CD4-positive, alpha-beta memory T cell (primary cell): ENCODE measurements at regions of chr11 and their contacts with region 1.

Region 1: DNA sequence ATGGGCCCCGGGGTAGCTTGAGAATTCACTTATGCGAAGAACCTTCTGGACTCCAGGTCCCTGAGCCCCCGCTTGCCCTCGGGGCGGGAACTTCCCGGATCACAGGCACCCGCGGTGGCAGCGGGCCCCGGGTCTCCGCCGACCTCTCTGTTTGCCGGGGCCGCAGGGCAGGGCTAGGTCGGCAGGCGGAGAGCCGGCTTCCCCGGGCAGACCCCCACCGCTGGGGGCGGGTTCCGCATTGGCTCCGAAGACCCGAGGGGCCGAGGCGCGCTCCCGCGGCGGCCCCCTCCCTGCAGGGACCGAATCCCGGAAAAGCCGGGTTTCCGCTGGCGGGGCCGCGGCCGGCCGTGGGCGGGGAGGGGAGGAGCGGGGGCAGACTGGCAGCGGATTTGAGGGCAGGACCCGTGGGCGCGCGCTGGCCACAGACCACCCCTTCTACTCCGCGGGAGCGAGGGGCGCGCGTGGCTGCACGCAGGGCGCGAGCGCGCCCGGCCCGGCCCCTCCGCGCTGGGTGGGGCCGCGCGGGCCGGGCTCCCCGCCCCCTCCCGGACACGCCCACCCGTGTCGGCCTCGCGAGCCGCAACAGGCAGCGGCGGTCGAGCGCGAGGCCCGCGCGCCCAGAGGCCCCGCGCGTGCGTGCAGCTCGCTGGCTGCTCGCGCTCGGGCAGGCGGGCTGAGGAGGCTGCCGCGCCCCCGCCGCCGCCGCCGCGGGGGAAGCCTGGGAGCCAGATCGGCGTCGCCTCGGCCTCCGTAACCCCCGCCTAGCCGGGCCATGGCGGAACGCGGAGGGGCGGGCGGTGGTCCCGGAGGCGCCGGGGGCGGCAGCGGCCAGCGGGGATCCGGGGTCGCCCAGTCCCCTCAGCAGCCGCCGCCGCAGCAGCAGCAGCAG is at the start of gene PACS1:
- DNase-seq: peak; percentile 71 to 81 (median 78)
- H3K4me3 ChIP-seq: peak within 1 kb of the TSS; percentile 59 to 98
- H3K4me3 Mint-ChIP-seq: peak within 1 kb of the TSS; percentile 91 to 98 (median 96)
- H3K27ac ChIP-seq: peak within 1 kb of the TSS; percentile 77
- H3K27ac Mint-ChIP-seq: peak within 1 kb of the TSS; percentile 93 to 99 (median 95)
- H3K4me1 ChIP-seq: peaks cover 59% of the 10 kb centered on the region
- H3K4me1 Mint-ChIP-seq: peaks cover 44 to 69% (median 54%) of the 10 kb centered on the region in 4 donors
- H3K27me3 ChIP-seq: no peaks in the 10 kb centered on the region
- H3K27me3 Mint-ChIP-seq: no peaks in the 10 kb centered on the region
- total RNA-seq, gene PACS1: 251 to 262 TPM

Region 2: GRCh38 chr11:65810046-65810868 is 259.7 kb before region 1 on chr11:
- CTCF ChIA-PET with region 1: no interaction called
- POLR2A ChIA-PET with region 1: no interaction called
- intact Hi-C with region 1: no loop called
- DNase-seq: no peak
- H3K4me3 ChIP-seq: no peak overlapping the region
- H3K4me3 Mint-ChIP-seq: peak overlapping the region in 1 of 8 donors; percentile 33
- H3K27ac ChIP-seq: no peak overlapping the region
- H3K27ac Mint-ChIP-seq: peak overlapping the region in 1 of 7 donors; percentile 22
- H3K4me1 ChIP-seq: no peaks in the 10 kb centered on the region
- H3K4me1 Mint-ChIP-seq: peaks cover 0 to 1% (median 0%) of the 10 kb centered on the region in 4 donors
- H3K27me3 ChIP-seq: no peaks in the 10 kb centered on the region
- H3K27me3 Mint-ChIP-seq: peaks cover 4 to 7% of the 10 kb centered on the region in 2 donors

Region 3: GRCh38 chr11:66051766-66052663 is 17.9 kb before region 1 on chr11 and contains the start of gene SF3B2:
- CTCF ChIA-PET with region 1: interaction called, 104 read pairs
- POLR2A ChIA-PET with region 1: interaction called, 66 read pairs
- intact Hi-C with region 1: loop called (anchors 1 kb)
- DNase-seq: peak; percentile 93 to 96 (median 96)
- H3K4me3 ChIP-seq: peak within 1 kb of the TSS; percentile 91 to 99
- H3K4me3 Mint-ChIP-seq: peak within 1 kb of the TSS; percentile 99 to 100 (median 100)
- H3K27ac ChIP-seq: peak within 1 kb of the TSS; percentile 81
- H3K27ac Mint-ChIP-seq: peak within 1 kb of the TSS; percentile 98 to 100 (median 99)
- H3K4me1 ChIP-seq: peaks cover 23% of the 10 kb centered on the region
- H3K4me1 Mint-ChIP-seq: peaks cover 12 to 40% (median 25%) of the 10 kb centered on the region in 4 donors
- H3K27me3 ChIP-seq: no peaks in the 10 kb centered on the region
- H3K27me3 Mint-ChIP-seq: peaks cover 0 to 1% of the 10 kb centered on the region in 2 donors
- total RNA-seq, gene SF3B2: 238 to 240 TPM

Region 4: DNA sequence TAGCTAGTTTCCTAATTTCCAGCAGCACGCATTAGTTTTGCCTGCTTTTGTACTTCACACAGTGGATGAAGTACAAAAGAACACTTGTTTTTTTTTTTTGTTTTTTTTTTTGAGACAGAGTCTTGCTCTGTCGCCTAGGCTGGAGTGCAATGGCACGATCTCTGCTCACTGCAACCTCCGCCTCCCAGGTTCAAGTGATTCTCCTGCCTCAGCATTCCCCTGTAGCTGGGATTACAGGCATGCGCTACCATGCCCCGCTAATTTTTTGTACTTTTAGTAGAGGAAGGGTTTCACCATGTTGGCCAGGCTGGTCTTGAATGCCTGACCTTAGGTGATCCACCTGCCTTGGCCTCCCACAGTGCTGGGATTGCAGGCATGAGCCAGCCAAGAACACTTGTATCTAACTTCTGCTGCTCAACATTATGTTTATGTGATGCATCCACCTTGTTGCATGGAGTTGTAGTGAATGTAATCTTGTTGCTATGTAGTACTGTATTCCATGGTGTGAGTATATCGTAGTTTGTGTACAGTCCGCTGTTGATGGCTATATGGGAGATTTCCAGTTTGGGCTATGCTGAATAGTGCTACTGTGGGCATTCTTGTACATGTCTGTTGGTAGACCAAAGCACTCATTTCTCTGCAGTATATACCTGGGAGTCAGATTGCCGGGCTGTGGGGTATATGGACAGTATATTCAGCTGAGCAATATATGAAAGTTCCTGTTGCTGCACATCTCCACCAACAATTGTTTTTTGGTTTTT is 17.4 kb after region 1 on chr11:
- CTCF ChIA-PET with region 1: interaction called, 146 read pairs
- POLR2A ChIA-PET with region 1: interaction called, 214 read pairs
- intact Hi-C with region 1: no loop called
- DNase-seq: no peak
- H3K4me3 ChIP-seq: no peak overlapping the region
- H3K4me3 Mint-ChIP-seq: peak overlapping the region in 6 of 8 donors; percentile 2 to 64 (median 26)
- H3K27ac ChIP-seq: no peak overlapping the region
- H3K27ac Mint-ChIP-seq: peak overlapping the region; percentile 60 to 93 (median 79)
- H3K4me1 ChIP-seq: peaks cover 73% of the 10 kb centered on the region
- H3K4me1 Mint-ChIP-seq: peaks cover 51 to 82% (median 66%) of the 10 kb centered on the region in 4 donors
- H3K27me3 ChIP-seq: no peaks in the 10 kb centered on the region
- H3K27me3 Mint-ChIP-seq: no peaks in the 10 kb centered on the region

Region 5: GRCh38 chr11:66112601-66113098 is 42.7 kb after region 1 on chr11:
- CTCF ChIA-PET with region 1: interaction called, 231 read pairs
- POLR2A ChIA-PET with region 1: interaction called, 185 read pairs
- intact Hi-C with region 1: no loop called
- DNase-seq: no peak
- H3K4me3 ChIP-seq: no peak overlapping the region
- H3K4me3 Mint-ChIP-seq: peak overlapping the region in 7 of 8 donors; percentile 14 to 84 (median 65)
- H3K27ac ChIP-seq: peak overlapping the region; percentile 49
- H3K27ac Mint-ChIP-seq: peak overlapping the region; percentile 77 to 96 (median 90)
- H3K4me1 ChIP-seq: peaks cover 99% of the 10 kb centered on the region
- H3K4me1 Mint-ChIP-seq: peaks cover 69 to 97% (median 79%) of the 10 kb centered on the region in 4 donors
- H3K27me3 ChIP-seq: no peaks in the 10 kb centered on the region
- H3K27me3 Mint-ChIP-seq: no peaks in the 10 kb centered on the region

Region 6: GRCh38 chr11:66136752-66137123 is 66.8 kb after region 1 on chr11:
- CTCF ChIA-PET with region 1: interaction called, 178 read pairs
- POLR2A ChIA-PET with region 1: interaction called, 55 read pairs
- intact Hi-C with region 1: loop called (anchors 1 kb)
- DNase-seq: peak in 1 of 5 donors; percentile 48
- H3K4me3 ChIP-seq: no peak overlapping the region
- H3K4me3 Mint-ChIP-seq: no peak overlapping the region
- H3K27ac ChIP-seq: no peak overlapping the region
- H3K27ac Mint-ChIP-seq: peak overlapping the region in 5 of 7 donors; percentile 32 to 81 (median 46)
- H3K4me1 ChIP-seq: peaks cover 48% of the 10 kb centered on the region
- H3K4me1 Mint-ChIP-seq: peaks cover 34 to 70% (median 54%) of the 10 kb centered on the region in 4 donors
- H3K27me3 ChIP-seq: no peaks in the 10 kb centered on the region
- H3K27me3 Mint-ChIP-seq: no peaks in the 10 kb centered on the region

Region 7: DNA sequence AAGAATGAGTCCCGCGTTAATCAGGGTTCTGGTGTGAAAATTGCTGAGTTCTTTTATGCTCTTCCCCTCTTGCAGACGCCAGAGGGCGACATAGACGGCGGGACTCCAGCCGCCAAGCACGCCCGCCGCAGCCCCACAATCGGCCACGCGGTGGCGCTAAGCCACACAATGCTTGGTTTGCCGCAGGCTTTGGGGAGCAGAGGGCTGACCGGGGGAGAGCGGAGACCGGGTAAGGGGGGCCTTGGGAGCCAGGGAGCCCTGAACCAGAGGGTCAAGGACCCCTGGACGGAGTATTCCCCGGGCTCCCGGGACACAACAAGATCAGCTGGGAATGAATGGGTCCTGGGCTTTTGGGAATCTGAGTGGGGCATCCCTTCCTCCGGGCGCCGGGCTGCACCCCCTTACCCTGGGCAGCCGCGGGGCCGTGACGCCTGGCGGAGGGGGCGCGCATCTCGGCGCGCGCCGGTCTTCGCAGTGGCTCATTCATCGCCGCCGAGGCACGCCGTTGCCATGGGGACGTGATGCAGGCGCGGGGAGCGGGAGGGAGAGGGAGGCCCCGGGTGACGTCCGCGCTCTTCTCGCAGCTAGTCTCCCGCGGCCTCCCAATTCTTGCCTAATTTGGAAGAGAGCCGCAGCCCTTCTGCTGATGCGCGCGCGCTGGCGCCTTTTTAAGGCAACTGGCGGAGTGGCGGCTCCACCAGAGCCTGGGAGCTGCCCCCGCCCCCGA is 338.7 kb after region 1 on chr11:
- CTCF ChIA-PET with region 1: no interaction called
- POLR2A ChIA-PET with region 1: no interaction called
- intact Hi-C with region 1: no loop called
- DNase-seq: peak; percentile 86 to 92 (median 89)
- H3K4me3 ChIP-seq: peak overlapping the region in 1 of 2 donors; percentile 70
- H3K4me3 Mint-ChIP-seq: peak overlapping the region; percentile 76 to 91 (median 80)
- H3K27ac ChIP-seq: no peak overlapping the region
- H3K27ac Mint-ChIP-seq: peak overlapping the region in 5 of 7 donors; percentile 36 to 89 (median 80)
- H3K4me1 ChIP-seq: peaks cover 5% of the 10 kb centered on the region
- H3K4me1 Mint-ChIP-seq: peaks cover 3 to 5% (median 4%) of the 10 kb centered on the region in 4 donors
- H3K27me3 ChIP-seq: no peaks in the 10 kb centered on the region
- H3K27me3 Mint-ChIP-seq: peaks cover 0 to 33% of the 10 kb centered on the region in 2 donors

Region 8: DNA sequence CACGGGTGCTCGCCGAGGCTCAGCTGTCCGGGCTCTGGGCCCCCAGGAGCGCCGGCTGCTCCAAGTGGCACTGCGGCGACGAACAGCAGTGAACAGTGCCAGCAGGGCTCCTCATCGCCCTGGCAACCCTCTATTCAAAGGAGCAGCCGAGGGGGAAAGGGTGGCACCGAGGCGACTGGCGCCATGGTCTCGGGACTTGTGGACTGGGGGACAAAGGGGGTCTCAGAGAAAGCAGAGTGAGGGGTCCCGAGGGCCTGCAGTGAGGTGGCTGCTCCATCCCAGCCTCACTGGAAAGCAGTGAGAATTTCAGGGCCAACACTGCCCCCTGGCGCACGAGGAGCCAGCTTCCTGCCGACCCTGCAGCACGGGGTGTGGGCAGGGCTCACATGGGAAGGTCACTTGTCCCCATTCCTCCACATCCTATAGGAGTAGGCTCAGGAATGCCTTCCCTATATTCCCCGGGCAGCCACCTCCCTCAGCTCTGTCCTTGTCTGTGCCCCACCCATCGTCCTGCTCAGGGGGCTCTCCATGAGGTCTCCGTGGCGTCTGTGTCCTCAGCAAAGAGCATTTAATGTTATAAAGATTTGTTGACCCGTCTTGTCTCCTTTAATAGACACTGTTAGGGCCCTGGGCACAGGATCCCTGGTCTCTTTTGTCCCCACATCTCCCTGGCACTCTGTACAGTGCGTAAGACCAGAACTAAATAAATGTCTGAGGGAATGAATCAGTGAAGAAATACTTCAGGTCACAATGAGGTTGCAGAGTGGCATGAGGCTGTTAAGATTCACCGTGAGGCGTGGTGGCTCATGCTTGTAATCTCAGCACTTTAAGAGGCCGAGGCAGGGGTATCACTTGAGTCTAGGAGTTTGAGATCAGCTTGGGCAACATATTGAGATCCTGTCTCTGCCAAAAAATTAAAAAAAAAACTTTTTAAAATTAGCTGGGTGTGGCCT is 813.3 kb after region 1 on chr11:
- CTCF ChIA-PET with region 1: no interaction called
- POLR2A ChIA-PET with region 1: no interaction called
- intact Hi-C with region 1: no loop called
- DNase-seq: peak in 4 of 5 donors; percentile 36 to 42 (median 37)
- H3K4me3 ChIP-seq: no peak overlapping the region
- H3K4me3 Mint-ChIP-seq: peak overlapping the region in 1 of 8 donors; percentile 26
- H3K27ac ChIP-seq: no peak overlapping the region
- H3K27ac Mint-ChIP-seq: peak overlapping the region in 1 of 7 donors; percentile 8
- H3K4me1 ChIP-seq: peaks cover 14% of the 10 kb centered on the region
- H3K4me1 Mint-ChIP-seq: peaks cover 10 to 25% (median 13%) of the 10 kb centered on the region in 4 donors
- H3K27me3 ChIP-seq: no peaks in the 10 kb centered on the region
- H3K27me3 Mint-ChIP-seq: no peaks in the 10 kb centered on the region